Activated naive CD4-positive, alpha-beta T cell treated with anti-CD3 and anti-CD28 coated beads, Interleukin-2, amount 10 ng/mL, durations not matched to agents 7 days and 5 days (primary cell): ENCODE measurements at regions of chr1 and their contacts with region 1.

Region 1: GRCh38 chr1:226132728-226133503 is 53.6 kb downstream of the ACBD3 start:
- DNase-seq: no peak
- H3K4me3 Mint-ChIP-seq: no peak overlapping the region
- H3K27ac Mint-ChIP-seq: no peak overlapping the region
- H3K4me1 Mint-ChIP-seq: peaks cover 9% of the 10 kb centered on the region
- H3K27me3 Mint-ChIP-seq: peaks cover 18% of the 10 kb centered on the region

Region 2: GRCh38 chr1:226201029-226201593 is 68.2 kb after region 1 on chr1:
- CTCF ChIA-PET with region 1: interaction called, 195 read pairs
- DNase-seq: peak; percentile 34
- H3K4me3 Mint-ChIP-seq: no peak overlapping the region
- H3K27ac Mint-ChIP-seq: no peak overlapping the region
- H3K4me1 Mint-ChIP-seq: peaks cover 2% of the 10 kb centered on the region
- H3K27me3 Mint-ChIP-seq: peaks cover 31% of the 10 kb centered on the region